Activated CD8-positive, alpha-beta memory T cell treated with anti-CD3 and anti-CD28 coated beads, Interleukin-2, amount 10 ng/mL, durations not matched to agents 7 days and 5 days (primary cell): ENCODE measurements at regions of chr17 and their contacts with region 1.

Region 1: DNA sequence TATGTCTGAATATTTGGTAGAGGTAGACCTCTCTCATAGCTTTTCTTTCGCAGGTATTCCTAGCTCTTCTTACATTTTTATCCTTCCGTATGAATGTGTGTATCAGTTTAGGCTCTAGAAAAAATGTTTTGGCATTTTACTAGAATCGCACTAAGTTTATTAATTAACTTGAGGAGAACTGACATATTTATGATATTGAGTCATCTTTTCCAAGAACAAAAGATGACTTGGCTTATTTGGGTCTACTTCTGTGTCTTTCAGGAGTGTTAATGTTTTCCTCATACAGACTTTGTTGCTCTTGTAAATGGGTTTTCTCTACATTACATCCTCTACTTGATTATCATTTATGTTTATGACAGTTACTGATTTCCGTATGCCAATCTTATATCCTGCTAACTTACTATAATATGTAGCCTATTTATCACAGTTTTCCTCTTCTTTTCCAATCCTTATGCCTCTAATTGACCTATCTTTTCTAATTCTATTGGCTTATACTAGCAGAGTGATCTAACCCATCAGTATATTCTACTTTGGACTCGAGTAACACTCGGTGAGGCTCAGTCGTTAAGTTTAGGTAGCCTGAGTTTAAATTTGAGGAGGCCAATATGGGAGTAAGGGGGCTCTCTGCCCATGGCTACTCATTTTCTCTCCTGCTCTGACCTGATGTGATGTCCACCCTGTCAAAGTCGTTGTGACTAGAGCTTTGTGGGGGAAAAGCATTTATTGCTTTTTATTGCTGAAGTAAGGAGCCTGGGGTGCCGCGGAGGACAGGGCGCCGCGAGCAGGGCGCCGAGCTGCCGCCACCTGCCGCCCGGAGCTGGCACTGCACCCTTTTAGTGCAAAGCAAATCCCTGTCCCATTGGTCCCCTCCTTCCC is 20.0 kb downstream of the ST6GALNAC1 start:
- DNase-seq: peak; percentile 80
- ATAC-seq: peak; percentile 95
- H3K4me3 Mint-ChIP-seq: no peak overlapping the region
- H3K27ac Mint-ChIP-seq: no peak overlapping the region
- H3K4me1 Mint-ChIP-seq: peaks cover 5% of the 10 kb centered on the region
- H3K27me3 Mint-ChIP-seq: peaks cover 19% of the 10 kb centered on the region

Region 2: GRCh38 chr17:76458580-76459490 is 164.7 kb before region 1 on chr17:
- CTCF ChIA-PET with region 1: no interaction called
- DNase-seq: no peak
- ATAC-seq: peak; percentile 25
- H3K4me3 Mint-ChIP-seq: no peak overlapping the region
- H3K27ac Mint-ChIP-seq: no peak overlapping the region
- H3K4me1 Mint-ChIP-seq: no peaks in the 10 kb centered on the region
- H3K27me3 Mint-ChIP-seq: peaks cover 16% of the 10 kb centered on the region

Region 3: DNA sequence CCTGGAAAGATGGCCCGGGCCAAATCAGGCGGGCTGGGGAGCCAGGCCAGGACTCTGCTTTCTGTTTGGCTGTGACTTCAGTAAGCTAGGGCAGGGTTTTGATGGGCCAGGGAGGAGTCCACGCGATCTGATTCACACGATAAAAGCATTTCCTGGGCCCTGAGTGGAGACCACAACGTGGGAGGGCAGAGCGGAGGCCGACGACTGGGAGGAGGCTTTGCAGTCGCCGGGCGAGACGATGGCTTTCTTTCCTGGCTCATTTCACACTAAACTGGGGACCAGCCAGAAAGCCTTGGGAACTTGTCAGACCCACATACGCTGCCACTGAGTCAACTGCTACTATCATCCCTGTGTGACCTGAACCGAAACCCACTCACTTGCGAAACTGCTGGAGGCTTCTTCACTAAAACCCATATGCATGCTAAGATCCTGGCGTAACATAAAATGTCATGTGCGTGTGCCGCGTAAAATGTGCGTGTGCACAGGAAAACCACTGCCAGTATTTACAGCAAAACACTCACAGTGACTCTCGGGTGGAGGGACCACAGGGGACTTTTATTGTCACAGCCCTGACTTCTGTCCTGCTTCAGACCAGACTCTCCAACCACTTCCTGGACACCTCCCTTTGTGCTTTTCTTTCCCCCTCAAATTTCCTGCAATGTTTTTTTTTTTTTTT is 108.1 kb before region 1 on chr17:
- CTCF ChIA-PET with region 1: interaction called, 14 read pairs
- DNase-seq: peak; percentile 91
- ATAC-seq: peak; percentile 86
- H3K4me3 Mint-ChIP-seq: peak overlapping the region; percentile 53
- H3K27ac Mint-ChIP-seq: peak overlapping the region; percentile 98
- H3K4me1 Mint-ChIP-seq: peaks cover 47% of the 10 kb centered on the region
- H3K27me3 Mint-ChIP-seq: no peaks in the 10 kb centered on the region

Region 4: DNA sequence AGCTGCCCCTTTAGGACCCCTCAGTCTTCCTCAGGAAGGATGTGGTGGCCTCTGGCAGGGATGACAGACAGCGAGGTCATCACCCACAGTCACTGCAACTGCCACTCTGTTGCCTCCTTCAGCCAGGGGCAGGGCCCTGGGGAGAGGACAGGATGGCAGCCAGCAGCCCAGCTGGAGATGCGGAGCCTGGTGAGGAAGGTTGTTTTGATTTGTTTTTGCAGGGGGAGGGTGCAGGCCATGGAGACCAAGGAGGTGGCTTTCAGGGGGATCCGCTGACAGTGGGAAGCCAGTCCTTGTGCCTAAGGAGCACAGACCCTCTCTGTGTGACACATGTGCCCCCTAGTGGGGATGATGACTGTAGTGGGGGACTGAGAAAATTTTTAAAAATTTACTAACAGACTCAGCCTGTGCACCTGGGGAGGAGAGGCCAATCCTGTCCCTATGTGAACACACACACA is 76.3 kb before region 1 on chr17:
- CTCF ChIA-PET with region 1: interaction called, 15 read pairs
- DNase-seq: peak; percentile 75
- ATAC-seq: peak; percentile 90
- H3K4me3 Mint-ChIP-seq: no peak overlapping the region
- H3K27ac Mint-ChIP-seq: no peak overlapping the region
- H3K4me1 Mint-ChIP-seq: peaks cover 5% of the 10 kb centered on the region
- H3K27me3 Mint-ChIP-seq: peaks cover 11% of the 10 kb centered on the region

Region 5: GRCh38 chr17:76567634-76568432 is 55.7 kb before region 1 on chr17:
- CTCF ChIA-PET with region 1: interaction called, 13 read pairs
- DNase-seq: no peak
- ATAC-seq: no peak
- H3K4me3 Mint-ChIP-seq: no peak overlapping the region
- H3K27ac Mint-ChIP-seq: no peak overlapping the region
- H3K4me1 Mint-ChIP-seq: peaks cover 15% of the 10 kb centered on the region
- H3K27me3 Mint-ChIP-seq: no peaks in the 10 kb centered on the region

Region 6: GRCh38 chr17:76612977-76613851 is 10.3 kb before region 1 on chr17:
- CTCF ChIA-PET with region 1: interaction called, 14 read pairs
- DNase-seq: no peak
- ATAC-seq: no peak
- H3K4me3 Mint-ChIP-seq: no peak overlapping the region
- H3K27ac Mint-ChIP-seq: no peak overlapping the region
- H3K4me1 Mint-ChIP-seq: peaks cover 7% of the 10 kb centered on the region
- H3K27me3 Mint-ChIP-seq: no peaks in the 10 kb centered on the region

Region 7: DNA sequence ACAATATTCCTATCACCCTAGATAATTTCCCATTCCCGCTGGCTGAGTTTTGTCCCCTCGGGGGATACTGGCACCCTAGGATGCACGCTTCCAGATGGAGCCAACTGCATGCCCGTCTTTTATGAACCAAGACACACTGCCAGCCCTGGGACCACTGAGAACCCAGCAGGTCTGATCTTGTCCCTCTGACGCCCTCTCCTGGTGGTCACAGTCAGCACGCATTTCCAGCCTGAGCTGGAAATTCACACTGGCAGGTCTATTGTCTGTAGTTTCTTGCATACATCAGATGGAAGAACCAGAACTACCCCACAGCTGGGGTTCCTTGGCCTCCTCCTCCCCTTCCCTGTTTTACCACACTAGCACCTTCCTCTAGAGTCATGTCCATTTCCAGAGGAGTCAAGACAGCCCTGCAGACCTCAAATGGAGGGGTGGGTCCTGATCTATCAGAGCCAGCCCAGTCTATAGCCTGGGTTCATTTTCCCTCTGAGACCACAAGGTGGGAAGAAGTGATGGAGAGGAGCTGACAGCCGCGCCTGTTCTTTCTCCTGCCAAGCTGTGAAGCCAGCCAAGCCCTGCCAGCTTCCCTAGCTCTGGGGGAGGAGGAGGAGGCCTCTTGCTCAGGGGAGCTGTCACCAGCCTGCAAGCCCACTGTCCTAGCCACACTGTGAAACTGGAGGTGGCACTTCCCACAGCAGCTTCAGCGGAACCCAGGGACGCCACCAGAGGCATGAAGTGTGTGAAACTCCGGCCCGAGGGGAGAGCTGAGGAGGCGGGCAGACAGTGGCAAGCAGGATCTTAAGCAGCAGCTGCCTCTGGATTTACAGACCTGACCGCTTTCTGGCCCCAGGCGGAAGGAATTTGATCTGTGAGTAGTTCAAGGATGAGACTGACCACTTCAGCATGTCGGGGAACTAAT is 58.0 kb after region 1 on chr17:
- CTCF ChIA-PET with region 1: interaction called, 41 read pairs
- DNase-seq: peak; percentile 82
- ATAC-seq: peak; percentile 70
- H3K4me3 Mint-ChIP-seq: no peak overlapping the region
- H3K27ac Mint-ChIP-seq: no peak overlapping the region
- H3K4me1 Mint-ChIP-seq: peaks cover 12% of the 10 kb centered on the region
- H3K27me3 Mint-ChIP-seq: no peaks in the 10 kb centered on the region